ENCODE measurements at regions of chr11 and their contacts with region 1.

Region 1: DNA sequence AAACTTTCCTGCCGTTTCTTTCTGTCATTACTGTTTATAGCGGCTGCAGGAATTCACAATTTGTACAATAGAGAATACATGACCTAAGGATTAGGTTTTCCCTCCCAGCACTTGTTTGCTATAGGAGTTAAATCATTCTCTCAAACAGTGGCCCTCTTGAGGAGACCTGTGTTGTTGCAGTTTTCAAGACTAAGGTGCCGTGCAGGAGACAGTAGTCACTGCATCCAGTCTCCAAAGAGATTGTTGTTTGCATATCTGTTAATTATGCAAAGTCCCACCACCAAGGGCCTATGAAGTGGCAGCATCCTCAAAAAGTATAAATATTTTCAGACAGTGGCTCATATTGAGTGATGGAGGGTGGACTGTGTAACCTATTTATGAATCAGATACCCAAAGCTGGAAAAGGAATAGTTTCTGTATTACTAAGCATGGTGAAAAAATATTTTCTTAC is 2.3 kb downstream of the PRSS23 start:
- DNase-seq: peak; percentile 62 to 84
- ATAC-seq: peak; percentile 40 to 70; a peak in 5 of 6 replicates
- H3K4me3 ChIP-seq: peak overlapping the region; percentile 85
- H3K27ac ChIP-seq: peak overlapping the region; percentile 93 to 96
- H3K4me1 ChIP-seq: peaks cover 65% of the 10 kb centered on the region
- CTCF ChIP-seq: peak; percentile 49
- EP300 ChIP-seq: 0 out of 5 replicates have a peak, but pooled peaks of 1 of the 2 experiments have one; percentile 16
- POLR2A ChIP-seq: no peak
- RAD21 ChIP-seq: peak; percentile 59 to 60

Region 2: DNA sequence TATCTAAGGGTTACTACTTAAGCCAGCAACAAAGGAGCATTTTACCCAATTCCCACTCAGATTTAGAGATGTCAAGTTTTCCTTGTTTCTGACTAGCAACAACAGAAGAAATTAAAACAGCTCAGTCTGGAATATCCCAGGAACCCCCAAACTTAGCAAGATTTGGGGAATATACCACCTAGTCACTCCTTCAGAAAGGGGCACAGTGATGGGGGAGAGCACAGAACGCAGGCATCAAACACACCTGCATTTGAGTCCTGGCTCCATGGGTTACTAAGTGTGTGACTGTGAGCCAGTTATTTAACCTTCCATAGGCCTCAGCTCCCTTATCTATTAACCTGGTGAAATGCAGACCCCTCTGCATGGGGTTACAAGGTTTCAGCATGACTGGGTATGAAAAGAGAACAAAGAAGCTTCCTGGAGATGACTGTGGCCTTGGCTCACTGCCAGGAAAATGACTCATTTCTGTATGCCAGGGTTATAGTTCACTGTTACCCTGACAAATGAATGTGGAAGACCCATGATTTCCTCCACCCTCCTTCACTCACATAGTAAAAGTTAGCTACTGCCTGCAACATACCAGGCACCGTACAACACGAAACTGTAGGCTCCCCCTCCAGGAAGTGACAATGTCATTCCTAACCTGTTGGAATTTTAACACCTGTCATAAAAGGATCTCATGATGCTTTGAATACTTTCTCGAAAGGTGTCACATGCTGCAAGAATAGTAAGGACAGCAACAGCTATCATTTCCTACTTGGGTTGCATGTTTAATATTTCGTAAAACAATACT is 209.8 kb before region 1 on chr11:
- CTCF ChIA-PET with region 1: no interaction called
- POLR2A ChIA-PET with region 1: interaction called, 17 read pairs
- DNase-seq: peak; percentile 82 to 97
- ATAC-seq: peak; percentile 84 to 94
- H3K4me3 ChIP-seq: no peak overlapping the region
- H3K27ac ChIP-seq: peak overlapping the region; percentile 89 to 90
- H3K4me1 ChIP-seq: peaks cover 54% of the 10 kb centered on the region
- CTCF ChIP-seq: no peak
- EP300 ChIP-seq: peak; percentile 65 to 81; a peak in 2 of 5 replicates
- POLR2A ChIP-seq: no peak
- RAD21 ChIP-seq: peak in 1 of 2 experiments; percentile 40; a peak in 1 of 5 replicates

Region 3: DNA sequence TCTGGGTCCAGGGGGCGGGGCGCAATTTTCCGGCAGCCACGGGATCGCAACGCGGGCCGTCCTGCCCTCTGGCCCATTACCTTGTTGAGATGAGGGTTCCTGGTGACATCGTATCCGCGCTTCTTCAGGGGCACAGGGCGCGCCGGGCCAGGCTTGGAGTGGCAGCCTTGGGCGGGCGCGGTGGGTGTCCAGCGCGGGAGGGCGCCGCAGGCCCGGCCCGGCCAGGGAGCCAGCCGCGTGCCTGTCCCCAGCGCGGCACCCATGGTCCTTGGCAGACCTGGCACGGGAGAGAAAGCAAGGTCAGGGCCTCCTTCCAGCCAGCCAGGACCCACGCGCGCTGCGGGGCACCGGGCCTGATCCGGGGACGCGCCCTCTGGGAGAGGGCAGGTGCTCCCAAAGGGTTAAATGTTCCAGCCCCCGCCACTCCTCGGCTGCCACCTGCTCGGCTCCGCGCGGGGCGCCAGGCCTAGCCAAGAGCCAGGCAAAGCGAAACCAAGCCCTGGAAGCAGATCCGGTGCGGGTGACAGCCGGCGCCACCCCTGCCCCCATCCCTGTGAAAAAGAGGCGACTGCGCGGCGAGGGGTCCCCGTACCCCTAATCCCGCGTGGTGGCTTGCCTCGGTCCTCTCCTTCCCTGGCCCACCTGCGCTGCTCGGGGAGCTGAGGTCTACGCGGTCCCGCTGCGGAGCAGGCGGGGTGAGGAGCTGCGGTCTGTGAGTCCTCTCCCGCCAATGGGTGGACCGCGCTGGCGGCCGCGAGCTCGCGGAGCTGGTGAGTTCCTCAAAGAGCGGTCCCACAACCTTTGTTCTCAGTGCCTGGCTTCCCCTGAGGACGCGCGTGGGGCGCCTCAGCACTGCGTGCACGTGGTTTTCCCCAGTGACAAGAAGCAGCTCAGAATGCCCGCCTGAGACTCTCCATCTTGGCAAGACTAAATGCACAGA is 130.7 kb before region 1 on chr11 and contains the start of gene ME3:
- CTCF ChIA-PET with region 1: interaction called, 4 read pairs
- POLR2A ChIA-PET with region 1: interaction called, 24 read pairs
- DNase-seq: peak; percentile 60 to 76
- ATAC-seq: peak; percentile 87 to 91
- H3K4me3 ChIP-seq: peak within 1 kb of the TSS; percentile 61
- H3K27ac ChIP-seq: peak within 1 kb of the TSS; percentile 94 to 99
- H3K4me1 ChIP-seq: peaks cover 32% of the 10 kb centered on the region
- CTCF ChIP-seq: no peak
- EP300 ChIP-seq: no peak
- POLR2A ChIP-seq: peak; percentile 10
- RAD21 ChIP-seq: no peak
- polyA plus RNA-seq, gene ME3: 21.4 and 22.3 TPM in 2 replicates

Region 4: GRCh38 chr11:86740709-86741483 is 61.7 kb before region 1 on chr11:
- CTCF ChIA-PET with region 1: interaction called, 29 read pairs
- POLR2A ChIA-PET with region 1: interaction called, 32 read pairs
- DNase-seq: peak; percentile 77 to 95
- ATAC-seq: peak; percentile 48 to 57
- H3K4me3 ChIP-seq: no peak overlapping the region
- H3K27ac ChIP-seq: peak overlapping the region; percentile 88 to 93
- H3K4me1 ChIP-seq: peaks cover 88% of the 10 kb centered on the region
- CTCF ChIP-seq: no peak
- EP300 ChIP-seq: peak; percentile 71 to 80; a peak in 3 of 5 replicates
- POLR2A ChIP-seq: no peak
- RAD21 ChIP-seq: peak; percentile 20 to 43; a peak in 3 of 5 replicates